ENCODE measurements at regions of chr20 and their contacts with region 1.

Region 1: DNA sequence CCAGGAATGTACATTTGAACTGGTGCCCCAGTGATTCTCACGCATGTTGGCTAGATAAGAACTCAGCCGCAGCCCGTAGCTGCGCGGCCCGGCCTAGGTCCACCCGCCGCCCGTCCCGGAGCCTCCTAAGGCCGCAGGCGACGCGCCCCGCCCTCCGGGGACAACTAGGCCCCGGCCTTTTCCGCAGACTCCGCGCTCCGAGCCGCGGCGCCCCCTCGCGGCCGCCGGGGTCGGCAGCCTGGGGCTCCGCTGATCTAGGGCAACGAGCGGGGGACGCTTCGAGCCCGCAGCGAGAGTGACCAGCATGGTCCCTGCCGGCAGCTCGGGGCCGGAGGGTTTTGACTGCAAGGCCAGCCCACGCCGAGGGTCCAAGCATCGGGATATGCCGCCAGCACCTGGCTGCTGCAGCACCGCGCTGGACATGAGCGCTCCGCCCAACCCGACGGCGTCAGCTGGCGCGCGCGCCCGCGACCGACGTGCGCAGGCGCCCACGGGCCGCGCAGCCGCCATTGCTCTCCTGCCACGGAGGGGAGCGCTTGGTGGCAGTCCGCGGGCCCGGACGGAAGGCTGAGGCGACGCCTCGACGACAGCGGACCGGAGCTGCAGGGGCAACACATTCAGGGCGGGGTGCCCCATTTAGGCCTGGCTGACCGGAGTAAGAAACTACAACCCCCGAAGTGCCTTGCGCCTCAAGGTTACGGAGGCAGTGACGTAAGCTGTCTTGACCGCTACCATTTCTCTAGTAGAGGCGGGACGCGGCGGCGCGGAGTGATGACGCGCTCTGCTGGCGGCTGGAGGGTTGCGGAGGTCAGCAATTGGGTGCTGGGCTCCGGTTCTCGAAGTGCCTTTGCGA is at the start of gene AP5S1:
- DNase-seq: peak; percentile 99
- ATAC-seq: peak; percentile 84
- H3K4me3 ChIP-seq: peak within 1 kb of the TSS; percentile 62 to 85 (median 75)
- H3K4me3 Mint-ChIP-seq: peak within 1 kb of the TSS; percentile 97
- H3K27ac ChIP-seq: peak within 1 kb of the TSS; percentile 97 to 98
- H3K27ac Mint-ChIP-seq: peak within 1 kb of the TSS; percentile 100
- H3K4me1 ChIP-seq: peaks cover 13 to 15% of the 10 kb centered on the region in 2 donors
- H3K4me1 Mint-ChIP-seq: peaks cover 15% of the 10 kb centered on the region
- H3K27me3 ChIP-seq: no peaks in the 10 kb centered on the region
- H3K27me3 Mint-ChIP-seq: no peaks in the 10 kb centered on the region
- CTCF ChIP-seq: peak; percentile 97
- total RNA-seq, gene AP5S1: 12.6 and 12.8 TPM in 2 replicates

Region 2: DNA sequence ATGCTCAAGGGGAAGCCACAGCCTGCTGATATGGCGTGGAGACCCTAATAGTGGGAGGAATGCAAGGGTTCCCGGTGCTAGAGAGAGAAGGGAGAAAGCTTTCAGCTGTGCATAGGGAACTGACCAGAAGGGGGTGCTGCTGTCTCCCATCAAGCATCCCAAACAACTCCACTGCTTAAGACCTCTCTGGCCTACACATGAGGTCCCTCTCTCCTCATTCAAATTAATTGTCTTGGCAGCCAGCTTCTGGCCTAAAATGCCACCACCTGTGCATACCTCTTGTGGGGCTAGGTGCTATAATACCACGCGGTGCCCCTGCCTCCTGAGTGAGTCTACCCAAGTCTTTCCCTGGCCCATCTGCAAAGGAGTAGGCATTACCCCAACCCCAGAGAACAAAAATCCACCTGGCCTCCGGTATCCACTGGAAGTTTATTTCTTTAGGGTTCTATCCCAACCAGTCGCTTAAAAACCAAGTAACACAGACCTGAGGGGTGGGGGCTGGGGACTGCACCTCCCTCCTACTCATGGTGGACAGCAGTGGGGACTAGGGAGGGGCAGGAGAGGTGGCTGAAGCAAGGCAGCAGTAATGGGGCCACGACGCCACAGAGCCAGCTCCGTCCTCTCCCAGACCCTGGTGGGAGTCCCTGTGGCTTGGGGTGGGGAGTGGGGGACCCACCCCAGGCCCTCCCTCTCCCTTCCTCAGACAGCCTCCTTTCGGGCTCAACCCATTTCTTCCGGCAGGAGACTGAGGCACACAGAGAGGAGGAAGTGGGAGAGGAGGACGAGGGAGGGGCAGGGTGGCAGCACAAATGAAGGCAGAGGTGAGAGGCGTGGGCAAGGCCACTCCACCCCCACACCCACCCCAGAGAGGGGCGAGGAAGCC is 66.9 kb before region 1 on chr20:
- CTCF ChIA-PET with region 1: interaction called, 3 read pairs
- POLR2A ChIA-PET with region 1: no interaction called
- intact Hi-C with region 1: loop called (anchors 1 kb)
- DNase-seq: peak; percentile 72
- ATAC-seq: peak; percentile 59
- H3K4me3 ChIP-seq: no peak overlapping the region
- H3K4me3 Mint-ChIP-seq: peak overlapping the region; percentile 37
- H3K27ac ChIP-seq: no peak overlapping the region
- H3K27ac Mint-ChIP-seq: peak overlapping the region; percentile 67
- H3K4me1 ChIP-seq: peaks cover 0 to 12% of the 10 kb centered on the region in 2 donors
- H3K4me1 Mint-ChIP-seq: peaks cover 7% of the 10 kb centered on the region
- H3K27me3 ChIP-seq: no peaks in the 10 kb centered on the region
- H3K27me3 Mint-ChIP-seq: no peaks in the 10 kb centered on the region
- CTCF ChIP-seq: peak; percentile 75

Region 3: DNA sequence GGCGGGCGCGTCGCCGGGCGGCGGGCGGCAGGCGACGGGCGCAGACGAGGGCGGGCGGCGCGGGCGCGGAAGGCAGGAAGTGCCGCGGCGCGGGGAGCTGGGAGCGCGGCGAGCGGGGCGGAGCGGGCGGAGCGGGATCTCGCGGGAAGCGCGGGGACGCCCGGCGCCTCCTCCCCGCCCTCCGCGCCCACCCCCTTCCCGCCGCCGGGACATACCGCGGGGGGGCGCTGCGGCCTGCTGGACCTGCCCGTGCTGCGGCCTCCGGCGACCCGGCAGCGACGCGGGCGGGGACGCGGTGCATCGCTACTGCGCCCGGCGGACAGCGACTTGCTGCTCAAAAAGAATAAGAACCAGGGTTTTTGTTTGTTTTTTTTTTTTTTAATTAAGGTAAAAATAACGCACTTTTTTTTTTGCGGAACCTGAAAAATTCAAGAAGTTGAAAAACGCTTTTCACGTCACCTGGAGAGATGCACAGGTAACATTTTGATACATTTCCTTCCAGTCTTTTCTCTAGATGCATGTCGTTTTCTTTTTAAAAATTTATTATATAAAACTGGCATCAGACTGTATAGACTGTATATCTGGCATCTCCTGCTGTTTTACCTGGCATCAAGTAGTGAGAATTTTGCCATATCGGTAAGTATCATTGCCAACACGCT is 33.5 kb before region 1 on chr20 and contains the start of gene CENPB:
- CTCF ChIA-PET with region 1: interaction called, 84 read pairs
- POLR2A ChIA-PET with region 1: interaction called, 10 read pairs
- intact Hi-C with region 1: loop called (anchors 1 kb)
- DNase-seq: peak; percentile 91
- ATAC-seq: peak; percentile 96
- H3K4me3 ChIP-seq: peak within 1 kb of the TSS; percentile 46 to 62 (median 59)
- H3K4me3 Mint-ChIP-seq: peak within 1 kb of the TSS; percentile 89
- H3K27ac ChIP-seq: peak within 1 kb of the TSS; percentile 16 to 56
- H3K27ac Mint-ChIP-seq: peak within 1 kb of the TSS; percentile 88
- H3K4me1 ChIP-seq: peaks cover 8 to 18% of the 10 kb centered on the region in 2 donors
- H3K4me1 Mint-ChIP-seq: peaks cover 30% of the 10 kb centered on the region
- H3K27me3 ChIP-seq: no peaks in the 10 kb centered on the region
- H3K27me3 Mint-ChIP-seq: no peaks in the 10 kb centered on the region
- CTCF ChIP-seq: peak; percentile 88
- total RNA-seq, gene CENPB: 43.7 and 46.4 TPM in 2 replicates

Region 4: DNA sequence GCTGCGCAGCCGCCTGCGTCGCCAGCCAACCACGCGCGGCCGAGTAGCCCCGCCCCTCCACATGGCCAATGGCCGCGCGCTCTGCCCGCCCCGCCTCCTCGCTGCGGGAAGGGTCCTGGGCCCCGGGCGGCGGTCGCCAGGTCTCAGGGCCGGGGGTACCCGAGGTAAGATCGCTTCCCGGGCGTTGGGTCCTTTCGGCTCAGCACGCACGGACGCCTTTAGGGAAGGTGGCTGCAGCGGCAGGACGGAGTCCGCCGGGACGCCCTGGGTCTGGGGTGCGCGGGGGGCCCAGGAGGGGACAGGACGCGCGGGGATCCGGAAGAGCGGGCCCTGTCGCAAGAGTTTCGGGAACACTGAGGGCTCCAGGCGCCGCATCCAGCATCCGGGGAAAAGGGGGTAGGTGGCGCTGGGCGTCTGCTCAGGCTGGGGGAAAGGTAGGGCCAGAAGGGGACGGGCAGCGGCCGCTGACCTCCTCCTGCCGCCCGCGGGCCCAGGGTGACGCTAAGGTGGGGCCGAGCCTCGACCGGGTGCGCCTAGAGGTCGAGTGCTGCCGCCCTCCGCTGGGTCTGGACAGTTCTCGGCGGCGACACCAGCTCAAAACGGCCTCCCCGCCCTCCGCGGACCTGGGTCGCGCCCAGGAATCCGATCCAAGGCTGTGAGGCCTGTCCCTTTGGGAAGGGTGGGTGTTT is 26.6 kb after region 1 on chr20 and contains the start of gene MAVS:
- CTCF ChIA-PET with region 1: interaction called, 8 read pairs
- POLR2A ChIA-PET with region 1: interaction called, 4 read pairs
- intact Hi-C with region 1: loop called (anchors 1 kb)
- DNase-seq: peak; percentile 88
- ATAC-seq: peak; percentile 98
- H3K4me3 ChIP-seq: peak within 1 kb of the TSS; percentile 59 to 93 (median 86)
- H3K4me3 Mint-ChIP-seq: peak within 1 kb of the TSS; percentile 90
- H3K27ac ChIP-seq: peak within 1 kb of the TSS; percentile 63 to 86
- H3K27ac Mint-ChIP-seq: peak within 1 kb of the TSS; percentile 87
- H3K4me1 ChIP-seq: peaks cover 8 to 18% of the 10 kb centered on the region in 2 donors
- H3K4me1 Mint-ChIP-seq: peaks cover 32% of the 10 kb centered on the region
- H3K27me3 ChIP-seq: no peaks in the 10 kb centered on the region
- H3K27me3 Mint-ChIP-seq: no peaks in the 10 kb centered on the region
- CTCF ChIP-seq: no peak
- total RNA-seq, gene MAVS: 52.2 and 53.3 TPM in 2 replicates

Region 5: GRCh38 chr20:3888622-3889488 is 68.6 kb after region 1 on chr20 and contains the start of gene PANK2:
- CTCF ChIA-PET with region 1: interaction called, 5 read pairs
- POLR2A ChIA-PET with region 1: no interaction called
- intact Hi-C with region 1: loop called (anchors 1 kb)
- DNase-seq: peak; percentile 97
- ATAC-seq: peak; percentile 96
- H3K4me3 ChIP-seq: peak within 1 kb of the TSS; percentile 70 to 90 (median 86)
- H3K4me3 Mint-ChIP-seq: peak within 1 kb of the TSS; percentile 97
- H3K27ac ChIP-seq: peak within 1 kb of the TSS; percentile 72 to 90
- H3K27ac Mint-ChIP-seq: peak within 1 kb of the TSS; percentile 97
- H3K4me1 ChIP-seq: peaks cover 44 to 50% of the 10 kb centered on the region in 2 donors
- H3K4me1 Mint-ChIP-seq: peaks cover 54% of the 10 kb centered on the region
- H3K27me3 ChIP-seq: no peaks in the 10 kb centered on the region
- H3K27me3 Mint-ChIP-seq: no peaks in the 10 kb centered on the region
- CTCF ChIP-seq: peak; percentile 19
- total RNA-seq, gene PANK2: 63.3 and 70.6 TPM in 2 replicates

Region 6: DNA sequence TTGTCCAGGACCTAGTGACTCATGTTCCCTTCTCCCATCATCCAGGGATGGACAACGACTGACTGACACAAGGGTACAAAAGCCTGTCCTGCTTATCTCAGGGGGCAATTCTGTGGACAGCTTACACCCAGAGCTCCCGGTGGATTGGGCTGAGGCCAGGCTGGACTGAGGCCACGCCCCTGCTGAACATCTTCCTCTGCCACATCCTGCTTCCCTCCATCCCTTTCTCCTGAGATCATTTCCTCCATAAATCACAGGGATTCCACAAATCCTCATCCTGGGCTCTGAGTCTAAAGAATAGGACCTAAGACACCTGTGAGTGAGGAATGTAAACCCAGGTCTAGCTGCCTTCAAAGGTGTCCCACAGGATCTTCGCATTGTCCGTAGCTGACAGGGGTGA is 225.5 kb after region 1 on chr20:
- CTCF ChIA-PET with region 1: no interaction called
- POLR2A ChIA-PET with region 1: no interaction called
- intact Hi-C with region 1: no loop called
- DNase-seq: no peak
- ATAC-seq: no peak
- H3K4me3 ChIP-seq: no peak overlapping the region
- H3K4me3 Mint-ChIP-seq: no peak overlapping the region
- H3K27ac ChIP-seq: no peak overlapping the region
- H3K27ac Mint-ChIP-seq: no peak overlapping the region
- H3K4me1 ChIP-seq: no peaks in the 10 kb centered on the region
- H3K4me1 Mint-ChIP-seq: no peaks in the 10 kb centered on the region
- H3K27me3 ChIP-seq: no peaks in the 10 kb centered on the region
- H3K27me3 Mint-ChIP-seq: peaks cover 43% of the 10 kb centered on the region
- CTCF ChIP-seq: no peak